ENCODE measurements at regions of chr14 and their contacts with region 1.

Region 1: GRCh38 chr14:22986508-22987054 is 4.2 kb upstream of the AJUBA start:
- DNase-seq: peak; percentile 95
- ATAC-seq: peak; percentile 57
- H3K4me3 Mint-ChIP-seq: no peak overlapping the region
- H3K27ac Mint-ChIP-seq: no peak overlapping the region
- H3K4me1 Mint-ChIP-seq: peaks cover 5% of the 10 kb centered on the region
- H3K27me3 Mint-ChIP-seq: no peaks in the 10 kb centered on the region; the same call in 1 of the 2 replicates
- CTCF ChIP-seq: peak; percentile 83

Region 2: GRCh38 chr14:22939684-22940083 is 46.9 kb before region 1 on chr14:
- CTCF ChIA-PET with region 1: interaction called, 24 read pairs
- POLR2A ChIA-PET with region 1: interaction called, 3 read pairs
- DNase-seq: no peak
- ATAC-seq: no peak
- H3K4me3 Mint-ChIP-seq: no peak overlapping the region
- H3K27ac Mint-ChIP-seq: no peak overlapping the region; the same call in 1 of the 2 replicates
- H3K4me1 Mint-ChIP-seq: 0 out of 2 replicates have a peak, but pooled peaks cover 2% of the 10 kb centered on the region
- H3K27me3 Mint-ChIP-seq: no peaks in the 10 kb centered on the region
- CTCF ChIP-seq: no peak

Region 3: GRCh38 chr14:22973217-22974032 is 13.2 kb before region 1 on chr14:
- CTCF ChIA-PET with region 1: interaction called, 78 read pairs
- POLR2A ChIA-PET with region 1: interaction called, 11 read pairs
- DNase-seq: peak; percentile 50
- ATAC-seq: peak; percentile 16
- H3K4me3 Mint-ChIP-seq: no peak overlapping the region
- H3K27ac Mint-ChIP-seq: peak overlapping the region; percentile 17
- H3K4me1 Mint-ChIP-seq: peaks cover 27% of the 10 kb centered on the region
- H3K27me3 Mint-ChIP-seq: no peaks in the 10 kb centered on the region
- CTCF ChIP-seq: peak; percentile 51

Region 4: GRCh38 chr14:23015618-23016017 is 29.0 kb after region 1 on chr14:
- CTCF ChIA-PET with region 1: interaction called, 36 read pairs
- POLR2A ChIA-PET with region 1: no interaction called
- DNase-seq: no peak
- ATAC-seq: no peak
- H3K4me3 Mint-ChIP-seq: no peak overlapping the region
- H3K27ac Mint-ChIP-seq: peak overlapping the region; percentile 4; the same call in 1 of the 2 replicates
- H3K4me1 Mint-ChIP-seq: peaks cover 2% of the 10 kb centered on the region; the same call in 1 of the 2 replicates
- H3K27me3 Mint-ChIP-seq: no peaks in the 10 kb centered on the region
- CTCF ChIP-seq: no peak

Region 5: DNA sequence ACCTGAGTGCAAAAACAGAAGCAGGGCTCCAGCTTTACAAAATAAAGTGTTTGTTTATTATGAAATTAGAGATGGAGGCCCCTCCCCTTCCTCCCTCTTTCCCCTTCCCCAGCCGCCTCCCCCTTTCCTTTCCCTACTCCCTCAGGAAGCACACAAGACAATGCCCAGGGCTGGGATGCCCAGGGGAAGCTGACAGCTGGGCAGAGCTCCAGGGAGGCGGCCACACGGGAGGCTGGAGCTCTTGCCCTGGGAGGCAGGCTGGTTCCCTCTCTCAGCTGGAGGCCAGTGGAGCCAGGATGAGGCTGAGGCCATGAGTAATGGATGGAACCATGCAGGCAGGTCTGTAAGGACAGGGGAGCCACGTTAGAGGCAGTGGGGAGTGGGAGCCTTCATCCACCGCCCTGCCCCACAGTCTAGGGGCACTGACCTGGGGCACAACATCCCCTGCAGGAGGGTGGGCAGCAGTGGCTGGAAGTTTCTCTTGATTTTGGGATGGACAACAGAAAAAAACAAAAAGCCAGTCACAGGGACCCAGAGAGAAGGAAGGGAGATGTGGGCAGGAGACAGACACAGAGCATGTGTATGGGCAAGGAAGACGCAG is 60.6 kb after region 1 on chr14:
- CTCF ChIA-PET with region 1: interaction called, 76 read pairs
- POLR2A ChIA-PET with region 1: no interaction called
- DNase-seq: no peak
- ATAC-seq: no peak
- H3K4me3 Mint-ChIP-seq: no peak overlapping the region
- H3K27ac Mint-ChIP-seq: peak overlapping the region; percentile 24; the same call in 1 of the 2 replicates
- H3K4me1 Mint-ChIP-seq: peaks cover 9% of the 10 kb centered on the region; the same call in 1 of the 2 replicates
- H3K27me3 Mint-ChIP-seq: no peaks in the 10 kb centered on the region
- CTCF ChIP-seq: no peak

Region 6: DNA sequence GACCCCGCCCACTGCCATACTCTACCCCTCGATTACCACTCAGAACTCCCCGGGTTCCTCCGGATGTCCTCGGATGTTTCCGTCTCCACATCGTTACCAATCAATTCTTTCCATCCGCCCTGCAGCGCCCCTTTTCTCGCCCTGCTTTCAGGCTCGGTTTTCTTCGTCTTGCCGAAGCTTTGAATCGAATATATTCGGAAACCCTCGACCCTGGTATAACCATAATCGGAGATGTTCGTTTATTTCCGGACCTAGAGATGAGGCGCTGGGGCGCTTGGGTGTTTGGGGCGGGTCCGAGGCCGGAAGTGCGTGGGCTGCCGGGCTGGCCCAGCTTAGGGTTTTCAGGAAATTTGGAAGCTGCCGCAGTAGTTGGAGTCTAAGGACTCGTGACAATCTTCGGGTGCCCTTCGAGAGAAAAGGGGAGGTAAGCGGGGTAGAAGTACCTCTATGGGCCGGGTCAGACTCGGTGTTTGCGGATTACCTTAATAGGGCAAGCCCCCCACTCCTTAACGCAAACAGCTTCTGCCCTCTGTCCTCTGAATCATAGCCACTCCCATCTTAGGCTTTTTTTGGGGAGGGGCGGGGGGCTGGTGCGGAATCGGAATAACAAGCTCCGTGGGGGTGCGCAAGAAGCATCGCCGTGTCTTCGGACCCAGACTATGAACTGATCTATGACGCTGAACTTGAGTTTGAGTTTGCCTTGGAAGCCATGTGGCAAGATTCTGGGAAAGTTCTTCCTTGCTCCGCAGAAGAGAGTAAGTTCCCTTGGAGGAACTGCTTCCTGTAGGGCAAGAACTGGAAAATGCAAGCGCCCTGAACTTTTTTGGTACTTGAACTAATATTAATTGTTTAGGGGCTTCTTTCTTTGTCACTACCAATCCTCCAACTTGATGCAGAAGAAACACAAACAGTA is 108.9 kb after region 1 on chr14 and contains the start of gene C14orf119:
- CTCF ChIA-PET with region 1: interaction called, 12 read pairs
- POLR2A ChIA-PET with region 1: no interaction called
- DNase-seq: peak; percentile 100
- ATAC-seq: peak; percentile 91
- H3K4me3 Mint-ChIP-seq: no peak within 1 kb of the TSS
- H3K27ac Mint-ChIP-seq: no peak within 1 kb of the TSS
- H3K4me1 Mint-ChIP-seq: peaks cover 37% of the 10 kb centered on the region
- H3K27me3 Mint-ChIP-seq: no peaks in the 10 kb centered on the region; the same call in 1 of the 2 replicates
- CTCF ChIP-seq: no peak
- total RNA-seq, gene C14orf119: 67.8 to 81.3 TPM (median 71.3 TPM) in 3 replicates

Region 7: DNA sequence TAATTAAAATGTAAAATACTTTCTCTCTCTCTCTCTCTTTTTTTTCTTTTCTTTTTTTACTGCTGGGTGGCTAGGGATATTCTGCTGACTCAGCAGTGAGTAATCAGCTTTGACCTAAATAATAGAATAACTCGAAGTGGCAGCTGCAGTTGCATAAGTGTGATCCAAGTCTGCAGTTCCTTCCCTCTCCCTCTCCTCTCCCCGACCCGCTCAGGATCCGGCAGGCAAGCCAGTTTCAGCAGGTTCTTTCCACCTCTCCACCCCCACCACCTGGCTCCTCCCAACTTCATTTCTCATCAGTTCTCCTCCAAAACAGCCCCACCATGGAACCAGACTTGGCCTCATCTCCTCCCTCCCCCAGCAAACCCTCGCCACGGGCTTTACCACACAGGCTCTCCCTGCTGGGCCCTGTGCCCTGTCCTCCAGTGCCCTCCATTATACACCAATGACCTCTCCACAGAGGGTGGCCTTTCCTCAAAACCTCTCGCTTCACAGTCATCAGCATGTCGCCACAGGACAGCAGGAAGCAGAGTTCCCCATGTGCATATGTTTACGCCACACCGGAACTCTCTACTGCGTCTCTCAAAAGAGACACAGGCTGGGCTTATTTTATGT is 174.4 kb after region 1 on chr14:
- CTCF ChIA-PET with region 1: no interaction called
- POLR2A ChIA-PET with region 1: no interaction called
- DNase-seq: peak; percentile 88
- ATAC-seq: peak; percentile 94
- H3K4me3 Mint-ChIP-seq: peak overlapping the region; percentile 53
- H3K27ac Mint-ChIP-seq: peak overlapping the region; percentile 98
- H3K4me1 Mint-ChIP-seq: peaks cover 65% of the 10 kb centered on the region
- H3K27me3 Mint-ChIP-seq: no peaks in the 10 kb centered on the region
- CTCF ChIP-seq: no peak